ENCODE measurements at regions of chr1 and their contacts with region 1.

Region 1: GRCh38 chr1:4214570-4215225 is 314.6 kb upstream of the C1orf174 start:
- DNase-seq: no peak
- H3K4me3 ChIP-seq: no peak overlapping the region
- H3K27ac ChIP-seq: no peak overlapping the region
- H3K4me1 ChIP-seq: no peaks in the 10 kb centered on the region
- H3K27me3 ChIP-seq: no peaks in the 10 kb centered on the region
- CTCF ChIP-seq: no peak
- EP300 ChIP-seq: no peak
- POLR2A ChIP-seq: no peak

Region 2: DNA sequence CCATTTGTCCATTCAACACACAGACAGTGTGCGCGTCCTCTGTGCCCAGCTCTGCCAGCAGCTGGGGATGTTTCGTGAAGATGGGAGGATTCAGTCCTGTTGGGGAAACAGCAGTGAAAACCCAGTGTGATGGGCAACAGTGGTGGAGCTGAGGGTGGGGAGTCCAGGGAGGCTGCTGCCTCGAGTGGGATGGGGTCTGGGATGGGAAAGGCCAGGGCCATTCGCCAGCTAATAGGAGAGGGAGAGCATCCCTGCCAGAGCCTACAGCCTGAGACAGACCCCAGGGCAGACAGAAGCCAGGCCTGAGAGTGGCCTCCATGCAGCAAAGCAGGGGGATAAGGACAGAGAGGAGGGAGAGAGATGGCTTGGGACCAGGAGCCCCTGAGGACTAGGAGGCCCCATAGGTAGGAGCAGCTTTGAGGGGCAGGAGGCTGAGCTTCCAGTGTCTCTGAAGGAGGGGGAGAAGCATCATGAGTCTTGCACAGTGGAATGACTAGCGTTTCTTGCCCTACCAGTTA is 1524.9 kb after region 1 on chr1:
- intact Hi-C with region 1: loop called in 1 of 4 experiments (anchors 5 kb)
- DNase-seq: no peak
- H3K4me3 ChIP-seq: no peak overlapping the region
- H3K27ac ChIP-seq: no peak overlapping the region
- H3K4me1 ChIP-seq: no peaks in the 10 kb centered on the region
- H3K27me3 ChIP-seq: no peaks in the 10 kb centered on the region
- CTCF ChIP-seq: no peak
- EP300 ChIP-seq: no peak
- POLR2A ChIP-seq: no peak

Measured in ovary (tissue), 10 donors.